Activated CD4-positive, alpha-beta T cell treated with anti-CD3 and anti-CD28 coated beads, Interleukin-2, amount 10 ng/mL, durations not matched to agents 24 days and 14 days (primary cell): ENCODE measurements at regions of chr16 and their contacts with region 1.

Region 1: GRCh38 chr16:86563489-86564345 is 2.9 kb upstream of the FOXC2 start:
- DNase-seq: peak; percentile 96
- H3K4me3 Mint-ChIP-seq: peak overlapping the region; percentile 30
- H3K27ac Mint-ChIP-seq: peak overlapping the region; percentile 27
- H3K4me1 Mint-ChIP-seq: peaks cover 7% of the 10 kb centered on the region
- H3K27me3 Mint-ChIP-seq: peaks cover 42% of the 10 kb centered on the region

Region 2: DNA sequence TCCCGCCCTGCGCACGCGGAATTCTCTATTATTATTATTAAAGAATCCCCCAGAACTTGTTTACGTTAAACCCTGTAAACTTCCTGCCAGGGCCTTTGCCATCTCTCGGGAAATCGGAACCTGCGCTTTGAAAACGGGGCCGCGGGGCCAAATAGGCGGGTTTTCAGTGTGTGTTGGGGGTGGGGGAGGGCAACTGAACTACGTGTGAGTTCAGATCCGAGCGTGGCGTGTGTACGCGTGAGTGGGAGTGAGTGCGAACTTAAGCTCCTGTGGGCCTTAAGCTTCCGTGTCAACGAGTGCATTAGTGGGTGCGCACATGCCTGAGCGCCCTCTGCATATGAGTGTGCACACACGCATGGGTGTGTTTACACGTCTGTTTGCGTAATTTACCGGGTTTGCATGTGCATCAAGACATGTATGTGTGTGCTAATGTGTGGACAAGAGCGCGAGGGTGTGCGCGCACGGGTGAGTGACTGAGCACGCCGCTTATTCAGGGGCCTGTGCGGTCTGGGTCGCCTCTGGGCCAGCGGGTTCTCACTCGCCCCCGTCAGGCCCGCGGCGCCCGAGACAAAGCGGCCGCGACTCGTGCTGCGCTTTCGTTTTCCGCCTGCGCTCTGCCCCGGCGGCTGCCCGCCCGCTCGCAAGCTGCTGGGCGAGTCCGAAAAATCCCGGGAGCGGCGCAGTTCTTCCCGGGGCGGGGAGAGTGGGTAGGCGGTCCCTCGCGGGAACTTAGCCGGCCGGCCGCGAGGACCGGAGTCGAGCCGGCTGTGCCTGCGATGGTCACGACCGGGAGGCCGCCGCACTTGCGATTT is 54.6 kb before region 1 on chr16:
- intact Hi-C with region 1: loop called (anchors 2 kb)
- DNase-seq: peak; percentile 82
- H3K4me3 Mint-ChIP-seq: peak overlapping the region; percentile 75
- H3K27ac Mint-ChIP-seq: peak overlapping the region; percentile 76
- H3K4me1 Mint-ChIP-seq: peaks cover 21% of the 10 kb centered on the region
- H3K27me3 Mint-ChIP-seq: peaks cover 64% of the 10 kb centered on the region

Region 3: DNA sequence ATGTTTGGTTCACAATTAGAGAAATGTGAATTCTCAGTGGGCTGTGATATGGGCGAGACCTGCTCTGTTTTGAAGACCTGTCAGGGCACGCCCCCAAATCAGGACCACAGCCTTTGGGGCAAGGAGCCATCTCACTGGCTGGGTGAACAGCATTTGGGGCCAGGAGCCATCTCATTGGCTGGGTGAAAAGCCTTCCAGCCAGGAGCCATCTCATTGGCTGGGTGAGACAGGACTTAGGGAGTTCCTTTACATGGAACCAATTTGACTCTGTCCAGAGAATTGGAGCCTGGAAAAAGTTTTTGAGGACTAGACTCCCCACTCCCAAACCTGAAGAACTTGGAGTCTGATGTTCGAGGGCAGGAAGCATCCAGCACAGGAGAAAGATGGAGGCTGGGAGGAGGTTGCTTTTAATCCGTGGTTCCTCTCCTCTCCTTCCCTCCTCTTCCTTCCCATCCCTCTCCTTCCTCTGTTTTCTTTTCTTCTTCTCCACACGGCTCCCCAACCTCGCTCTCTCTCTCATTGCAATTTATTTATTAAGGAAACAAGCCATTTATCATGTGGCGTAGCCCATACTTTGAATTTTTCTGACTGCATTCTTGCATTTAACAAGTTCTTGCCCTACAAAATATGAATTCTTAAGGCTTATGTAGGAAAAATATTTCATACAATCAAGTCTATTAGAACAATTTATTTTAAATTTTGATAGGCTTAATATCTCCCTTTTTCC is 34.3 kb after region 1 on chr16:
- intact Hi-C with region 1: no loop called
- DNase-seq: no peak
- H3K4me3 Mint-ChIP-seq: no peak overlapping the region
- H3K27ac Mint-ChIP-seq: no peak overlapping the region
- H3K4me1 Mint-ChIP-seq: peaks cover 3% of the 10 kb centered on the region
- H3K27me3 Mint-ChIP-seq: peaks cover 38% of the 10 kb centered on the region

Region 4: GRCh38 chr16:86874141-86874540 is 310.4 kb after region 1 on chr16:
- intact Hi-C with region 1: loop called (anchors 1 kb)
- DNase-seq: peak; percentile 79
- H3K4me3 Mint-ChIP-seq: no peak overlapping the region
- H3K27ac Mint-ChIP-seq: no peak overlapping the region
- H3K4me1 Mint-ChIP-seq: no peaks in the 10 kb centered on the region
- H3K27me3 Mint-ChIP-seq: peaks cover 22% of the 10 kb centered on the region

Region 5: DNA sequence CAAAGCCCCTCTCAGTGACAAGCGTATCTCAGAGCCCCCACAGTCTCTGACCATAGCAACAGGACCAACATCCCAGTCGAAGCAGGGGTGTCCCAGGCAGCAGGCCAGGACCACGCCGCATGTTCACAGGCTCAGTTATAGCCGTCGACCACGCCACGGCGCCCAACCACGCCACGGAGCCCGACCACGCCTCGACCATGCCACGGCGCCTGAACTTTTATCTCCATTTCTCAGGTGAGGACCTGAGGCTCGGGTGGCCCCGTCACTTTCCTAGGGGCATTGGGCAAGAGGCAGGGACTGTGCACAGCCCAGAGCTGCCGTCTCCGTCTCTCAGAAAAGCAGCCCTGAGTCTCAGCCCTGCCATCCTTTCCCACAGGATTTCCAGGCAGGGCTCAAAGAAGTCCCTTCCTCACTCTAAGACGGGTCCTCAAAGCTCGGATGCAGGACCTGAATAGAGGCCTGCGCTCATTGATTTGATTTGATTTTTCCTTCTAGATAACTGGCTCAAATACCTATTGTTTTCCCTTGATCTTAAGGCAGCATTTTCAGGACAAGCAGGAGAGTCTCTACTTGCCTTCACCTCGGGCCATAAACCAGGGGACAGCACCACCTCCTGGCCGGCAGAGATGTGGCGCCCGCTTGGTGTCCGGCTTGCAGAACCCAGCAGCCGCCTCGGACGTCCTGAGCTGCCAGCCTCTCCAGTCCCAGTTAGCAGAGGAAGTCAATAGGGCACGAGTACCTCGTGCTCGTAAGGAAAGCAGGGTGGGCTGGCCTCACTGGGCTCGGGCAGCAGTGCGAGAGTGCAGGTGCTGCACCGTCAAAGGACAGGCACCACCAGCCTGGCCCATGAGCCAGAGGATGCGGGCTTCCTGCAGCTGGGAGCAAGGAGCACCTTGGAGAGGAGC is 714.7 kb after region 1 on chr16:
- intact Hi-C with region 1: loop called (anchors 5 kb)
- DNase-seq: peak; percentile 86
- H3K4me3 Mint-ChIP-seq: no peak overlapping the region
- H3K27ac Mint-ChIP-seq: no peak overlapping the region
- H3K4me1 Mint-ChIP-seq: peaks cover 11% of the 10 kb centered on the region
- H3K27me3 Mint-ChIP-seq: no peaks in the 10 kb centered on the region